ENCODE measurements at regions of chr9 and their contacts with region 1.

Region 1: DNA sequence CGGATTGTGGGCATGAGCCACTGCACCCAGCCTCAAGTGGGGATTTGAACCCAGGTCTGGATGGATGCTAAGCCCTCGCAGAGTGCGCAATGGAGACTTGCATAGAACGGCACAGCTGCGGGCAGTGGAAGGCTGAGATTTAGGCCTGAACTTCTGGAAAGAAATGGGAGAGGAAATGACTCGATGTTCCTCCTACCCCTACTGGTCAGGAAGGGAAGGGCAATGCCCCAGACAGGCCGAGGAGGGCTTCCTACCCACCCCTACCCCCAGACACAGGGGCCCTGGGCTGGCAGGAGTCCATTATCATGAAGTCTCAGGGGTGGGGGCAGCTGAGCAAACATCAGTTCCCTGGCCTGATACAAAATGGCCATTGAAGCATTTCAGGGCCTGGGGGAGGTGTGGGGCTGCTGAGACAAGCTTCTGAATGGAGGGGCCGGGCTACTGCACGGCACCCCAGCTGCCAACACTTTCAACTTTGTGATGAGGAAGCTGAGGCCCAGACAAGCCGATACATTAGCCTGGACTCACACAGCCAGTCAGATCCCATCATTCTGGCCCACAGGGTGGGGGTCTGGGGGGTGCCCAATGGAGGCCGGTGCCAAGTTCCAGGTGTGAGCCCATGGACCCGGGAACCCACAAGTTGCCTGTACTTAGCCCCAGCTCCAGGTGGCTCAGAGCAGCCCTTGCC is 13.5 kb upstream of the WDR38 start:
- DNase-seq: no peak
- H3K4me3 ChIP-seq: no peak overlapping the region
- CTCF ChIP-seq: peak; percentile 55

Region 2: DNA sequence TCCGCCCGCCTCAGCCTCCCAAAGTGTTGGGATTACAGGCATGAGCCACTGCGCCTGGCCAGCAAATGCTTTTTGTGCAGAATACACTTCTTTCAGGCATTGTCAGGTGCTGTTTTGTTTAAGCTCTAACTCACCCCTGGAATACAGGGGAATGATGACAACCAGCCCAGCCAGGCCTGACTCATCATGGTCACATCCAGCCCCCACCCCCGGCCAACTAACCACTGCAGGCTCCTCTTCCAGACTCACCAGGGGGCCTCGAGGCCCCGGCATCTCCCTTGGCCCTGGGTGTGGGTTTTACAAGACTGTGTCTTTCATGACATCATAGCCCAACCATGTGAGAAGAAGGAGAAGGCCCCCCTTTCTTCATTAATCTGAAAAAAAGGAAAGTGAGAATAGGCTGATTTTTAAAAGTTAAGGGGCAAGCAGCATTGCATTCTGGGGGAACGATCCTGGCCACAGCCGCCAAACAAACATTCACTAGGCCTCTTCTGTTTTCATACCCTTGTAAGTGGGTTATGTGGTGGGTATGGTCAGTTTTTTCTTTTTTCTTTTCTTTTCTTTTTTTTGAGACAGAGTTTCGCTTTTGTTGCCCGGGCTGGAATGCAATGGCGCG is 27.2 kb before region 1 on chr9:
- CTCF ChIA-PET with region 1: interaction called, 14 read pairs
- POLR2A ChIA-PET with region 1: no interaction called
- DNase-seq: peak; percentile 92
- H3K4me3 ChIP-seq: no peak overlapping the region
- CTCF ChIP-seq: peak; percentile 15

Region 3: DNA sequence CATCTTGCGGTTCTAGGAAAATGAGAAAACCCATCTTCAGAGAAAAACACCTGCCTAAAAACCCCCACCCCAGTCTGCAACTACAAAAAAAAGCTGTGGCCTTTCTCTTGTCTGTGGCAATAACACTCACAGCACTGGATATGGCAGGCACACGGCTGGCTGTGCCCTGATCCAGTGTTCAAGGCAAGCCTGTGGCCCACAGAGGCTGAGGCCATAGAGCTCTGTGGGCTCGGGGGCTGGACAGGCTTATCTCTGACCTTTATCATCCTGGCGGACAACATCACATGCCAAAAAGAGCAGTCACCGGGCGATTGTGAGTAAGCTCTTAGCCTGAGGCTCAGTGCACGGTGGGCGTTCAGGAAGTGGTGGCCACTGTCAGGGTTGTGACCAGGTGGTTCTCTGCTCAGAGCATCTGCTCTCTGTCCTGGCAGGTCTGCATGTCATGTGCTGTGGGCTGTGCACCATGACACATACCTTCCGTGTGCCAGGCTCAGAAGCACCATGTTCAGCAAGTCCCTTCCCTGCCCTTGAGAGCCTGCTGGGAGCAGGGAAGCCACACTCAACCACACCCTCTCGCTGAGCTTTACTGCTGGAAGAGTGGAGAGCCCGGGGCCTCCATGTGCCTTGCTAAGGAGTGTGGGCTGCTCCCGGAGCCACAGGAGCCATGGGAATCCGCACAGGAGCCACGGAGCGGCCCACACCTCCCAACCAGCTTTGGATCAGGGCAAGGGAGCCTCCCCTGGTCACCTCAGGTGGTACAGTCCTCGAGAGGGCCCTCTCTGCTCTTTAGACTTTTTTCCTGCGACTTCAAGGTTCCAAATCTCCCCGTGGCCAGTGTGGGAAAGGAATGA is 21.1 kb before region 1 on chr9:
- CTCF ChIA-PET with region 1: interaction called, 14 read pairs
- POLR2A ChIA-PET with region 1: no interaction called
- DNase-seq: no peak
- H3K4me3 ChIP-seq: no peak overlapping the region
- CTCF ChIP-seq: no peak

Region 4: DNA sequence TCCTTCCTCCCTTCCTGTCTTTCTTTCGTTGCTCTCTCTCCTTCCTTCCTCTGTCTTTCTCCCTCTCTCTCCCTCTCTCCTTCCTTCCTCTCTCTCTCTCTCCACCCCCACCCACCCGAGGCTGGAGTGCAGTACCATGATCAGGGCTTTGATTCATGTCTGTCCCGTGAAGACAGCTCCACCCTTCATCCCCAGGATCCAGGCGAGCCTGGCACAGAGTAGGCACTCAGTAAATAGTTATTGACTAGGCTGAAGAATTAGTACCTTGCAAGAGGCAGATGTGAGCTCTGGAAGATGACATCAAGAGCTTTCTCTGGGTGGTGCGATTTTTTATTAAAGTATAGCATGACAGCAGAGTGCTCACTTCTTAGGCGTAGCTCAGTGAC is 10.5 kb before region 1 on chr9:
- CTCF ChIA-PET with region 1: interaction called, 276 read pairs
- POLR2A ChIA-PET with region 1: no interaction called
- DNase-seq: no peak
- H3K4me3 ChIP-seq: no peak overlapping the region
- CTCF ChIP-seq: no peak

Region 5: GRCh38 chr9:124868511-124869465 is 29.0 kb after region 1 on chr9:
- CTCF ChIA-PET with region 1: no interaction called
- POLR2A ChIA-PET with region 1: no interaction called
- DNase-seq: no peak
- H3K4me3 ChIP-seq: peak overlapping the region; percentile 90
- CTCF ChIP-seq: peak; percentile 29

Region 6: GRCh38 chr9:125038166-125038565 is 198.4 kb after region 1 on chr9:
- CTCF ChIA-PET with region 1: no interaction called
- POLR2A ChIA-PET with region 1: no interaction called
- DNase-seq: no peak
- H3K4me3 ChIP-seq: no peak overlapping the region
- CTCF ChIP-seq: no peak

Measured in AG04449 (cell line).